ENCODE measurements at regions of chr3 and their contacts with region 1.

Region 1: GRCh38 chr3:121648219-121648958 is 12.3 kb downstream of the HCLS1 start:
- DNase-seq: peak in 1 of 2 donors; percentile 74
- ATAC-seq: peak; percentile 89 to 99 (median 96)
- H3K4me3 ChIP-seq: no peak overlapping the region
- H3K27ac ChIP-seq: peak overlapping the region; percentile 49 to 83 (median 72)
- H3K4me1 ChIP-seq: peaks cover 0 to 25% (median 13%) of the 10 kb centered on the region in 9 donors
- H3K27me3 ChIP-seq: no peaks in the 10 kb centered on the region
- CTCF ChIP-seq: peak in 4 of 9 donors; percentile 22 to 51 (median 41)

Region 2: DNA sequence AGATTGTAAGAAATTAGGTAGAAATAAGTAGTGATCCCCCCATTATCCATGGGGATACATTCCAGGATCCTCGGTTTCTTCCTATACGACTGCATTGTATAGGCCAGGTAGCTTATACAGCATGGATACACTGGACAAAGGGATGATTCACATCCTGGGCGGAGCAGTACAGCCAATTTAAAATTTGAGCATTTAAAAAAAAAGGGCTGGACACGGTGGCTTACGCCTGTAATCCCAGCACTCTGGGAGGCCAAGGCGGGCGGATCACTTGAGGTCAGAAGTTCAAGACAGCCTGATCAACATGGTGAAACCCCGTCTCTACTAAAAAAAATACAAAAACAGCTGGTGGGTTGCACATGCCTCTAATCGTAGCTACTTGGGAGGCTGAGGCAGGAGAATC is 81.6 kb before region 1 on chr3:
- intact Hi-C with region 1: loop called in 1 of 10 experiments (anchors 10 kb)
- DNase-seq: no peak
- ATAC-seq: no peak
- H3K4me3 ChIP-seq: no peak overlapping the region
- H3K27ac ChIP-seq: no peak overlapping the region
- H3K4me1 ChIP-seq: no peaks in the 10 kb centered on the region
- H3K27me3 ChIP-seq: no peaks in the 10 kb centered on the region
- CTCF ChIP-seq: no peak

Region 3: DNA sequence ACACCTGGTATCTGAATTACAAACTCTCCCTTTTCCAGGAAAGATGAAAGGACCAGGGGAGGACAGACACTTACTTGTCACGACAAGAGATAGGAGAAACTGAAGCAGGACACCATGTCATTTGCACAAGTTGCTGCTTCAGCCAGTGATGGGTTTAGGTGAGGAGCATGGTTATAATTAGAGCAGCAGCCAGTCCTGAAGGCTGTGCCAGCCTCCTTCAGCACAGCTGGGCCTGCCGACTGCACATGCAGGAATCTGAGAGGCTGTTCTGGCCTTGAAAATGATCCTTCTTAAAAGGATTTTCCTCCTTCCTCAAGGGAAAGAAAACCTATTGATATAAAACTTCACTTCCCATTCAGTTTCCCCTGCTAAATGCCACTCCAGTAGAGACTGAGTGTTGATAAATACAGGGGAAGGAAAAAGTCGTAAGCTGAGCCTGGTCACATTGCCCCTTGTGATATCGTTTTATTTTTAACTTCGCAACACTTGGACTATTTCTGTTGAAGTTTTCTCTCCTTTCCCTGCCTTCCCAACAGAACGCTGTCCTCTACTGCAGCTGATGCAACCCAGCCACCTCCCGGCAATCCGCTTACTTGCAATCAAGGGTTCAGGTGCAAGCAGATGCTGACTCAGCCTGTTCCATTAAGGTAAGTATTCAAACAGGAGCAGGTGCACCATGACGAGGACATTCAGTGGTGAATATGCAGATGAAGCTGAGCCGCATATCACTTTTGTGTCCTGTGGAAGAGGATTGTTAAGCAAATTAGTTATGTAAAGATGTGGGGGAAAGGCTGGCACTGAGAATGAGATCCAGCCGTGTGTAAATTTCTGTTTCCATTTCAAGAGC is 55.3 kb before region 1 on chr3 and contains the start of gene FBXO40:
- intact Hi-C with region 1: loop called in 2 of 10 experiments (anchors 5 to 10 kb)
- DNase-seq: peak; percentile 42 to 57
- ATAC-seq: peak; percentile 69 to 85 (median 81)
- H3K4me3 ChIP-seq: peak within 1 kb of the TSS; percentile 18 to 57 (median 47)
- H3K27ac ChIP-seq: peak within 1 kb of the TSS; percentile 67 to 91 (median 84)
- H3K4me1 ChIP-seq: peaks cover 0 to 43% (median 4%) of the 10 kb centered on the region in 9 donors
- H3K27me3 ChIP-seq: no peaks in the 10 kb centered on the region
- CTCF ChIP-seq: peak in 3 of 9 donors; percentile 23 to 37 (median 25)
- total RNA-seq, gene FBXO40: 99.3 to 279 (median 220) TPM

Region 4: DNA sequence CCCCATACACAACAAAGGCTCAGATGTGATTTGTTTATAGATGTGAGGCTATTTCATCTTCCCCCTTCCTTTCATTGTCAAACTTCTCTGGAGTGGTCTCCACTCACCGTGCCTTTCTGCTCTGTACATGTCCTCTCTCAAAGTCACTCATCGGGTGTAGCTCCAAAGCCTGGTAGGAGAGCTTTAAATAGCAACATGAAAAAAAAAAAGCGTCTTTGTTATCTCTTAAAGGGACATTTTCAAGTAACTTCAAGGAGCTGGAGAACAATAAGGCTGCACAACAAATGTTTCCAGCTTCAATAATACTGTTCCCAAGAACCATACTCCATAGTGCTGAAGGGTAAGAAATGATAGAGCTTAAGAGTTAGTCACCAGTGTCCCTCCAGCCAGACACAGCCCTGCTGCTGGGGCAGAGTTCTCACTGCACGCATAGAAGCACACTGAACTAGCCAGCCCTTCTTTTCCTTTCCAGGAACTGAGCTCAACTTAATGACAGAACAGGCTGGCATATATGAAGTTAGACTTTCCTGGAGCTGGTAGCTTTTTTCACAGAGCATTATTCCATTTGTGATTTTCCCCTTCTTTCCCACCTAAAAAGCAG is 47.1 kb before region 1 on chr3:
- intact Hi-C with region 1: loop called in 2 of 10 experiments (anchors 5 to 10 kb)
- DNase-seq: peak in 1 of 2 donors; percentile 23
- ATAC-seq: peak; percentile 53 to 87 (median 82)
- H3K4me3 ChIP-seq: peak overlapping the region in 3 of 10 donors; percentile 13 to 17 (median 15)
- H3K27ac ChIP-seq: peak overlapping the region; percentile 67 to 89 (median 82)
- H3K4me1 ChIP-seq: peaks cover 4 to 86% (median 38%) of the 10 kb centered on the region in 9 donors
- H3K27me3 ChIP-seq: no peaks in the 10 kb centered on the region
- CTCF ChIP-seq: no peak

Region 5: DNA sequence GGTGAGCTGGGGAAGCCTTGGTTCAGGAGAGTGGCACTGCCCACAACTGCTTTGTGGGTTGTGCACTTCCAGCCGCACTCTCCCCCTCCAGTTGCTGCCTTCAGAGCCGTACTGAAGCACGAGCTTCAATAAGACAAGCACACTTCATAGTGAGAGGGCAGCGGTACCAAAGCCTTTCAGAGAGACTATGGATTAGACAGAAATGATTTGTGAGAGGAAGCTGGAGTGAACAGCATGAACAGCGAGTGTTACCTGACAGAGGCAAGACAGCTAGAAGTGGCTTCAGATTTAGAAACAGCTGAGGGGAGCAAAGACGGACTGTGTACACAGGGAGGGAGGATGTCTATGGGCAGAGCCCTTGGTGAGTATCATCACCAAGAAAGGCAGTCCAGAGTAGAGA is 18.8 kb before region 1 on chr3:
- intact Hi-C with region 1: no loop called
- DNase-seq: peak in 1 of 2 donors; percentile 15
- ATAC-seq: peak; percentile 57 to 88 (median 64)
- H3K4me3 ChIP-seq: no peak overlapping the region
- H3K27ac ChIP-seq: peak overlapping the region in 9 of 10 donors; percentile 13 to 56 (median 41)
- H3K4me1 ChIP-seq: peaks cover 0 to 44% (median 14%) of the 10 kb centered on the region in 9 donors
- H3K27me3 ChIP-seq: no peaks in the 10 kb centered on the region
- CTCF ChIP-seq: no peak

Region 6: DNA sequence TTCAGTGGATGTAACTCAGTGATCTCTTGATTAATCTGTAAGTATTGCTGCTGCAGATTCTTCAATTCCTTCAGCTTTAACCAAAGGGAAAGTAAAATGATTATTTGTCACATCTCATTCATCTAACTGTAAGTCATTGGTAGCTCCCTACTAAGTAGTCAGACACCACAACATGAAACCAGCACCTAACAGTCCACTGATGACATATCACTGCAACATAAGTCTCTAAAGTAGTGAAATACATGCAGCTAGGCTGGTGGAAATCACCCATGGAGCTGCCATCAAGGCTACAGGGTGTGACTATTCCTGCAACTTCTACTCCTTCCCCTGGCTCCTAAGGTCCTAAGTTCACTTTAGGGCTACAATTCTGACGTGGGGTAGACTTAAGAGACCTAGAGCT is 33.4 kb after region 1 on chr3:
- intact Hi-C with region 1: no loop called
- DNase-seq: no peak
- ATAC-seq: no peak
- H3K4me3 ChIP-seq: no peak overlapping the region
- H3K27ac ChIP-seq: no peak overlapping the region
- H3K4me1 ChIP-seq: no peaks in the 10 kb centered on the region
- H3K27me3 ChIP-seq: no peaks in the 10 kb centered on the region
- CTCF ChIP-seq: no peak

Region 7: GRCh38 chr3:122092460-122093165 is 444.2 kb after region 1 on chr3:
- intact Hi-C with region 1: no loop called
- DNase-seq: peak; percentile 13 to 15
- ATAC-seq: peak in 4 of 8 donors; percentile 40 to 55 (median 46)
- H3K4me3 ChIP-seq: no peak overlapping the region
- H3K27ac ChIP-seq: peak overlapping the region in 1 of 10 donors; percentile 26
- H3K4me1 ChIP-seq: peaks cover 0 to 16% (median 0%) of the 10 kb centered on the region in 9 donors
- H3K27me3 ChIP-seq: peaks cover 0 to 7% (median 0%) of the 10 kb centered on the region in 7 donors
- CTCF ChIP-seq: peak in 3 of 9 donors; percentile 12 to 61 (median 25)

Measured in heart right ventricle (tissue), 16 donors.